ENCODE measurements at regions of chr19 and their contacts with region 1.

Region 1: DNA sequence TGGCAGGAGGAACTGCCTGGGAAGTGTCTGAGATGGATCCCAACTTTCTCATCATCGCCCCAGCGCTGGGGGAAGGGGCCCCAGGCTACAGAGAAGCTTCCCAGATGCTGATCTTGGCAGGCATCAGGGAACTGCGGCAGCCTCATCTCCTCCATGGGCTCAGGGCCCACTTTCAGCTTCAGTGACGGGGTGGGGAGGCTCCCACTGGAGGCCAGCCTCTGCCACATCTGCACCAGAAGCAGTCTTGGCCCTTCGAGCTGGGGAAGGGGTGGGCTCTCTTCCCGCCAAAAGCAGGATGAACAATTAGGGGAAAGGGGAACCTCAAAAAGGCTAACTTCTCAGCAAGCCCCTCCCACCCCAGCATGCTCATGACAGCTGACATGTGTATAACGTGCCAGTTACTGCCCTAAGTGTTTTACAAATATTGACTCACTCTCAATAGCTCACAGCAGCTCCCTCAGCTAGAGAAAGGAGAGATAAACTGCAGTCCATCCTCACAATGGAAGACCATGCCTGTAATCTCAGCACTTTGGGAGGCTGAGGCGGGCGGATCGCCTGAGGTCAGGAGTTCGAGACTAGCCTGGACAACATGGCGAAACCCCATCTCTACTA is 7.1 kb upstream of the S1PR2 start:
- DNase-seq: no peak
- H3K4me3 ChIP-seq: no peak overlapping the region
- H3K4me3 Mint-ChIP-seq: peak overlapping the region in 1 of 8 donors; percentile 46
- H3K27ac ChIP-seq: no peak overlapping the region
- H3K27ac Mint-ChIP-seq: peak overlapping the region in 5 of 7 donors; percentile 27 to 82 (median 46)
- H3K4me1 ChIP-seq: peaks cover 25% of the 10 kb centered on the region
- H3K4me1 Mint-ChIP-seq: peaks cover 14 to 27% (median 17%) of the 10 kb centered on the region in 4 donors
- H3K27me3 ChIP-seq: no peaks in the 10 kb centered on the region
- H3K27me3 Mint-ChIP-seq: no peaks in the 10 kb centered on the region

Region 2: DNA sequence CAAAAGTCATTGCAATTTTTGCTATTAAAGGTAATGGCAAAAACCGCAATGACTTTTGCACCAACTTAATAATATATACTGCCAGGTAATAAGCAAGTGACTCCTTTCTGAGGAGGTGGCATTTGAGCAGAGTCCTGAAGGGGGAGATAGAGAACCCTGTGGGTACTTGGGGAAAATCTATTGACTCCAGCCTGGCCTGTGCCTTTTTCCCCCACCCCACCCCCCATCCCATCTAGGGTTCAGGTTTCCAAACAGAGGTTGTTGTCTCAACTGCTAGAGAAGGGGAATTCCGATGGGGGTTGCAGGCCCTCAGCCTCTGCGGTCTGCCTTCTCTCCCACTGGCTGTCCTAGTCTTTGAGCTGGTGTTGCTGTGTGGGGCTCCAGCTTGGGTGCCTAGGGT is 18.6 kb before region 1 on chr19:
- CTCF ChIA-PET with region 1: no interaction called
- POLR2A ChIA-PET with region 1: interaction called, 12 read pairs
- intact Hi-C with region 1: no loop called
- DNase-seq: peak; percentile 32 to 81 (median 44)
- H3K4me3 ChIP-seq: no peak overlapping the region
- H3K4me3 Mint-ChIP-seq: no peak overlapping the region
- H3K27ac ChIP-seq: no peak overlapping the region
- H3K27ac Mint-ChIP-seq: peak overlapping the region in 2 of 7 donors; percentile 41 to 42
- H3K4me1 ChIP-seq: peaks cover 15% of the 10 kb centered on the region
- H3K4me1 Mint-ChIP-seq: peaks cover 4 to 16% (median 5%) of the 10 kb centered on the region in 4 donors
- H3K27me3 ChIP-seq: no peaks in the 10 kb centered on the region
- H3K27me3 Mint-ChIP-seq: no peaks in the 10 kb centered on the region

Region 3: DNA sequence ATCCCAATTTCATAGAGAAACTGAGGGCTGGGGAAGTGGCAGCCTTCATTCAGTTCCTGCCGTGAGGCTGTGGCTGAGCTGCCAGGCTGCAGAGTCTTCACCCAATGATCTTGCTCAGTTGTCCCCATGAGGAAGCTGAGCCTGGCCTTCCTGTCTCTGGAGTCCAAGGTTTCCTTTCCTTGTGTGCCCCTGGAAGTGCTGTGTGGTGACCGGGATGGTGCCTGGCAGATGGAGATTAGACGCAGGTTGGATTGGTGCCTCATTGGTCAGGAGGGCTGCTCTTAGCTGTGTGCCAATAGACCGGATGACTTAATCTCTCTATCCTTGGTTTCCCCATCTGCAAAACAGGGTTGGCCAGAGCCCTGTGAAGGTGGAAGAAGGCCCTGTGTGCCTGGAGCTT is 504.2 kb after region 1 on chr19:
- CTCF ChIA-PET with region 1: no interaction called
- POLR2A ChIA-PET with region 1: no interaction called
- intact Hi-C with region 1: no loop called
- DNase-seq: no peak
- H3K4me3 ChIP-seq: no peak overlapping the region
- H3K4me3 Mint-ChIP-seq: no peak overlapping the region
- H3K27ac ChIP-seq: no peak overlapping the region
- H3K27ac Mint-ChIP-seq: peak overlapping the region in 5 of 7 donors; percentile 42 to 93 (median 47)
- H3K4me1 ChIP-seq: peaks cover 51% of the 10 kb centered on the region
- H3K4me1 Mint-ChIP-seq: peaks cover 25 to 67% (median 44%) of the 10 kb centered on the region in 4 donors
- H3K27me3 ChIP-seq: no peaks in the 10 kb centered on the region
- H3K27me3 Mint-ChIP-seq: no peaks in the 10 kb centered on the region

Measured in CD4-positive, alpha-beta memory T cell (primary cell).